ENCODE measurements at regions of chr21 and their contacts with region 1.

Region 1: GRCh38 chr21:17436626-17437171 is 76.1 kb upstream of the CXADR start:
- DNase-seq: no peak
- ATAC-seq: peak; percentile 40
- H3K4me3 ChIP-seq: no peak overlapping the region
- H3K4me1 ChIP-seq: peaks cover 16% of the 10 kb centered on the region
- CTCF ChIP-seq: no peak

Region 2: GRCh38 chr21:17527240-17527639 is 90.5 kb after region 1 on chr21:
- intact Hi-C with region 1: loop called in 1 of 2 experiments (anchors 10 kb)
- DNase-seq: no peak
- ATAC-seq: no peak
- H3K4me3 ChIP-seq: no peak overlapping the region
- H3K4me1 ChIP-seq: peaks cover 19% of the 10 kb centered on the region
- CTCF ChIP-seq: no peak

Measured in mucosa of descending colon (tissue), 3 donors.